Esophagus muscularis mucosa (tissue), 4 donors: ENCODE measurements at regions of chr3 and their contacts with region 1.

Region 1: DNA sequence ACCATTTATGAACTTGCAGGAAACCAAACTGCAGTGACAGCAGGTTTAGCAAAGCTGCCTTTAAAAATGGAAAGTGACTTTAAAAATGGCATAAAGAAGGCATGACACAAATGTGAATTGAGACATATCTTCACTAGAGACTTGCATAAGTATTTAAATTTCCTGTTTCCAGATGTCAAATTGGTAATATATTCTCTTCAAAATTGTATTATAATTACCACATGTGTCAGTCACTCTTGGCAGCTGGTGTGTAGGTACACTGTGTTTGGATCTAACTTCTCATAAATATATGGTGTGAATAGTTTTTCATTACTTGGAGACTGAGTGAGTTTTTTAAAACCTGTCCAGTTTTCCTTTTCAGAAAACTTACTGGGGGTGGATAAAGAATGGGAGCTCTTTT is 636.2 kb upstream of the SGO1 start:
- DNase-seq: no peak
- H3K4me3 ChIP-seq: no peak overlapping the region
- H3K27ac ChIP-seq: no peak overlapping the region
- H3K4me1 ChIP-seq: no peaks in the 10 kb centered on the region
- H3K27me3 ChIP-seq: no peaks in the 10 kb centered on the region
- CTCF ChIP-seq: no peak
- EP300 ChIP-seq: no peak
- POLR2A ChIP-seq: no peak

Region 2: GRCh38 chr3:20798666-20799065 is 23.6 kb before region 1 on chr3:
- intact Hi-C with region 1: no loop called
- DNase-seq: no peak
- H3K4me3 ChIP-seq: no peak overlapping the region
- H3K27ac ChIP-seq: no peak overlapping the region
- H3K4me1 ChIP-seq: no peaks in the 10 kb centered on the region
- H3K27me3 ChIP-seq: no peaks in the 10 kb centered on the region
- CTCF ChIP-seq: no peak
- EP300 ChIP-seq: no peak
- POLR2A ChIP-seq: no peak

Region 3: GRCh38 chr3:20832963-20833362 is 10.7 kb after region 1 on chr3:
- intact Hi-C with region 1: loop called (anchors 1 kb)
- DNase-seq: no peak
- H3K4me3 ChIP-seq: no peak overlapping the region
- H3K27ac ChIP-seq: no peak overlapping the region
- H3K4me1 ChIP-seq: no peaks in the 10 kb centered on the region
- H3K27me3 ChIP-seq: no peaks in the 10 kb centered on the region
- CTCF ChIP-seq: no peak
- EP300 ChIP-seq: no peak
- POLR2A ChIP-seq: no peak